ENCODE measurements at regions of chr1 and their contacts with region 1.

Region 1: GRCh38 chr1:244047621-244048471 is 3.2 kb upstream of the ZBTB18 start:
- DNase-seq: peak; percentile 90 to 98
- ATAC-seq: peak; percentile 80 to 94 (median 85)
- H3K4me3 ChIP-seq: peak overlapping the region; percentile 99
- H3K4me3 Mint-ChIP-seq: peak overlapping the region; percentile 97
- H3K27ac ChIP-seq: peak overlapping the region; percentile 100
- H3K27ac Mint-ChIP-seq: peak overlapping the region; percentile 94 to 97
- H3K4me1 ChIP-seq: peaks cover 15% of the 10 kb centered on the region
- H3K4me1 Mint-ChIP-seq: peaks cover 25 to 35% of the 10 kb centered on the region in 2 donors
- H3K27me3 ChIP-seq: no peaks in the 10 kb centered on the region
- H3K27me3 Mint-ChIP-seq: peaks cover 4 to 30% of the 10 kb centered on the region in 2 donors
- CTCF ChIP-seq: no peak

Region 2: GRCh38 chr1:243850452-243851256 is 197.2 kb before region 1 on chr1:
- intact Hi-C with region 1: loop called (anchors 5 kb)
- DNase-seq: peak; percentile 81 to 90
- ATAC-seq: peak; percentile 42 to 58 (median 52)
- H3K4me3 ChIP-seq: peak overlapping the region; percentile 85
- H3K4me3 Mint-ChIP-seq: peak overlapping the region; percentile 90
- H3K27ac ChIP-seq: peak overlapping the region; percentile 89
- H3K27ac Mint-ChIP-seq: peak overlapping the region; percentile 89 to 99
- H3K4me1 ChIP-seq: peaks cover 10% of the 10 kb centered on the region
- H3K4me1 Mint-ChIP-seq: peaks cover 26 to 30% of the 10 kb centered on the region in 2 donors
- H3K27me3 ChIP-seq: no peaks in the 10 kb centered on the region
- H3K27me3 Mint-ChIP-seq: peaks cover 5 to 8% of the 10 kb centered on the region in 2 donors
- CTCF ChIP-seq: no peak

Region 3: DNA sequence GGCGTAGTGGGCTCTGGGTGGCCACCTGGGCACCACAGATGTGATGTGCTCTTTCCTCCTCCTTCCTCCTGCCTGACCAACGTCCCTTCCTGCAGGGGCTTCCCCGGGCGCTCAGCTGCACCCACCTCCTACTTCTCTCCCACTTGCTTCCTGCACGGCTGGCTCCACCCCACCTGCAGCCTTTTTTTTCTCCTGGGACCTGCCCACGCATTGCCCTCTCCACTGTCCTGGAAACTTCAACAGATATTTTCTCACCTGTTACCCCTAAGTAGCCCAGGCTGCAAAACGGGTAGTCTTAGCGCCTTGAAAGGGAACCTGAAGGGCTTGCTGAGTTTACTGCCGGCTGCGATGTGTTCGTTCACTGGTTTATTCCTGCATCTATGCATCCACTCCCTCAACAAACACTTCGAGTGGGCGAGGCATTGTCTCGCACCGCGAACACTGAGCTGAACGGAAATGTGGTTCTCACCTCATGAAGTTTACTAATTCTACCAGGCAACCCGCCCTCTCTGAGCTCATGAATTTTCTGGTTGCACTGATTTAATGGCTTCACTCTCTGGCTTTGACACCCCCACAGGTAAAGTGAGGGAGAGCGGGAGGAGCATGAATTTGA is 26.8 kb after region 1 on chr1:
- intact Hi-C with region 1: loop called (anchors 1 kb)
- DNase-seq: peak; percentile 34 to 90
- ATAC-seq: peak; percentile 84 to 96 (median 88)
- H3K4me3 ChIP-seq: peak overlapping the region; percentile 5
- H3K4me3 Mint-ChIP-seq: peak overlapping the region; percentile 84
- H3K27ac ChIP-seq: peak overlapping the region; percentile 26
- H3K27ac Mint-ChIP-seq: peak overlapping the region; percentile 56 to 58
- H3K4me1 ChIP-seq: peaks cover 24% of the 10 kb centered on the region
- H3K4me1 Mint-ChIP-seq: peaks cover 17 to 23% of the 10 kb centered on the region in 2 donors
- H3K27me3 ChIP-seq: no peaks in the 10 kb centered on the region
- H3K27me3 Mint-ChIP-seq: peaks cover 25 to 45% of the 10 kb centered on the region in 2 donors
- CTCF ChIP-seq: no peak

Region 4: DNA sequence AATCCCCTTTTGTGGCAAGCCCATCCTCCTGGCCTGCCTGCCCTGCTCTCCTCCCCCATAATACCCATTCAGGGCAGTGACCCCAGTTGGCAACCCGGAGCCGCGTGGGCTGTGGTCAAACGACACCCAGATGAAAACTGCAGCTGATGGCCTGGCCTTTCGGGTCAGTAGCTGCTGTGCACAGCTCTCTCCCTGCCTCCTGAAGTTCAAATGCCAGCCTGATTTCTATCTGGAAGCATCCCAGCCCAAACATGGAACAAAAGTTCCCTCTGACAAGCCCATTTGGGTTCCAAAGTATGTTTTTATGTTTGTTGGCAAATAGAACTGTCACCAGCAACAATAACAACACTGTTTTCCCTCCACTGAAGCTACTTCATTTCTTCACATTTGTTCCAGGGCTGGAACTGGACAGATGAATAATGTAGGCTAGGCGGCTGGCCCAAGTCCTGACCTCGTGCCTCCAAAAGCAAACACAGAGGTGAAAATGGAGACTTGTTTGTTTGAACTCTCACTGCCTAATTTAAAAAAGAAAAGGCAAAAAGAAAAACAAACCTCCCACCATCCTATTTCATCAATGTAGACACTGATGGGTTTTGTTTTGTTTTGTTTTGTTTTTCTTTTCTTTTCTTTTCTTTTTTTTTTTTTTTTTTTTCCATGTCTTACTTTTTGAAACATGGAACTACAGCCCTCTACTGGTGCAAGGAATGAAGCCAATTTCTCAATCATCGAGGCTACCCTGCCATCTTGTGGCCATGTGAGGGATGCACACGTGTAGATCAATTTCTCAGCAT is 224.8 kb after region 1 on chr1:
- intact Hi-C with region 1: loop called (anchors 10 kb)
- DNase-seq: peak; percentile 61 to 90
- ATAC-seq: peak; percentile 94 to 100 (median 99)
- H3K4me3 ChIP-seq: no peak overlapping the region
- H3K4me3 Mint-ChIP-seq: no peak overlapping the region
- H3K27ac ChIP-seq: no peak overlapping the region
- H3K27ac Mint-ChIP-seq: peak overlapping the region in 1 of 2 donors; percentile 4
- H3K4me1 ChIP-seq: peaks cover 7% of the 10 kb centered on the region
- H3K4me1 Mint-ChIP-seq: peaks cover 6 to 30% of the 10 kb centered on the region in 2 donors
- H3K27me3 ChIP-seq: no peaks in the 10 kb centered on the region
- H3K27me3 Mint-ChIP-seq: peaks cover 0 to 4% of the 10 kb centered on the region in 2 donors
- CTCF ChIP-seq: peak; percentile 99

Region 5: DNA sequence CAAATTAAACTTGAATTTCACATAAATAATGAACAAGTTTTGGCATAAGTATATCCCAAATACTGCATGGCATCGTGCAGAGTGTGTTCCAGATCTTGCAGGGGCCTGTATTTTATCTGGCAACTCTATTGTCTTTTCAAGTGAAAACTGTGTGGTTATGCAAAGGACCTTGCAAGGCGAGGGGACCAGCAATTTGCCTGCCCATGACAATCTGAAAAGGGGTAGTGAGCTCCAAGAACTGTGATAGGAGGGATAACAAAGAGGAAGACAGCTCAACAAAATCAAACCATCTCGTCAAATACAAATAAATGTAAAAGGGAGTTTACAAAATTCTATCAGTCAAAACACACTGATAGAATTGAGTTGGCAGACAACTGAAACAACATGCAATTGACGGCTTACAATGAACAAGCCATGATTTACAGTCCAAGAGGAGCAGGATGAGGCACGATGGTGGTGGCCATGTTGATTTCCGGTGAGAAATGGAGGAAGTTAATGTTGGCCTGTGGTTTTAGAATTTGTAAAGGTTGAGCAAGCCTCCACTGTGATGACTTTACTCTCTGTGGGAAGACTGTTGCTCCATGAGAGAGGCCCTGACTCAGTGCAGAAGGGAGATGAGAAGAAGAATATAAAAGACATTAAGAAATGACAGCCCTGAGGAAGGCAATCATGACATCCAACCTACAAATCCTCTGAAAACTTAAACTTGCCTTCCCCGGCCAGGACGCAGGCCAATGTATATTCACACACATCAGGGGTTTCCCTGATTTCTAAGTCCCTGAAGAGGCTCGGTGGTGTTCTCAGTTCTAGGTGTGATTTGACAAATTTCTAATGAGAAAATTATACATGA is 271.7 kb after region 1 on chr1:
- intact Hi-C with region 1: loop called (anchors 2 kb)
- DNase-seq: peak; percentile 62 to 76
- ATAC-seq: peak; percentile 69 to 88 (median 88)
- H3K4me3 ChIP-seq: no peak overlapping the region
- H3K4me3 Mint-ChIP-seq: peak overlapping the region; percentile 80
- H3K27ac ChIP-seq: peak overlapping the region; percentile 67
- H3K27ac Mint-ChIP-seq: peak overlapping the region; percentile 88 to 92
- H3K4me1 ChIP-seq: peaks cover 90% of the 10 kb centered on the region
- H3K4me1 Mint-ChIP-seq: peaks cover 79 to 83% of the 10 kb centered on the region in 2 donors
- H3K27me3 ChIP-seq: no peaks in the 10 kb centered on the region
- H3K27me3 Mint-ChIP-seq: no peaks in the 10 kb centered on the region
- CTCF ChIP-seq: no peak

Region 6: GRCh38 chr1:244451951-244452795 is 404.3 kb after region 1 on chr1:
- intact Hi-C with region 1: loop called (anchors 2 kb)
- DNase-seq: peak; percentile 98 to 100
- ATAC-seq: peak; percentile 85 to 96 (median 90)
- H3K4me3 ChIP-seq: peak overlapping the region; percentile 72
- H3K4me3 Mint-ChIP-seq: peak overlapping the region; percentile 80
- H3K27ac ChIP-seq: peak overlapping the region; percentile 92
- H3K27ac Mint-ChIP-seq: peak overlapping the region; percentile 85 to 88
- H3K4me1 ChIP-seq: peaks cover 9% of the 10 kb centered on the region
- H3K4me1 Mint-ChIP-seq: peaks cover 33 to 37% of the 10 kb centered on the region in 2 donors
- H3K27me3 ChIP-seq: no peaks in the 10 kb centered on the region
- H3K27me3 Mint-ChIP-seq: no peaks in the 10 kb centered on the region
- CTCF ChIP-seq: peak; percentile 31

Measured in natural killer cell (primary cell).